Thyroid gland (tissue), 4 donors: ENCODE measurements at regions of chr19 and their contacts with region 1.

Region 1: DNA sequence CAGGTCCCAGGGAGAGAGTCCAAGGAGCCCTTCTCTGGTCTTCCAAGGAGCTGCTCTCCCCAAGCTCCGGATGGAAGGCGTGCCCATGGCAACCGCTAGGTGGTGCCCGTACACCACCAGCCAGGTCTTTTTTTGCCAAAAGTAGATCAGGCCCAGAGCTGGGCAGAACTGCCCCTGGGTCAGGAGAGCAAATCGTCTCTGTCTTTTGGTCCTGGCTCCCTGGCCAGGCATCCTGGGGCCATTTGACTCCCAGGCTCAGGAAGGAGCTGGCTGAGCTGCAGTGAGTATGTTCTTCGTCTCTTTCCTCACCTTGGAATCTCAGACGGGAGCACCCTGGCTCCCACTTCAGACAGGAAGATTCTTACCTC is 24.6 kb upstream of the BCL3 start:
- DNase-seq: peak; percentile 81 to 83
- H3K4me3 ChIP-seq: no peak overlapping the region
- H3K27ac ChIP-seq: peak overlapping the region in 1 of 3 donors; percentile 58
- H3K4me1 ChIP-seq: peaks cover 18 to 43% of the 10 kb centered on the region in 2 donors
- H3K27me3 ChIP-seq: no peaks in the 10 kb centered on the region
- CTCF ChIP-seq: peak; percentile 87 to 98 (median 97)
- POLR2A ChIP-seq: no peak

Region 2: GRCh38 chr19:44757735-44758505 is 34.0 kb after region 1 on chr19:
- intact Hi-C with region 1: loop called (anchors 5 kb)
- DNase-seq: peak; percentile 57 to 66
- H3K4me3 ChIP-seq: peak overlapping the region in 1 of 3 donors; percentile 8
- H3K27ac ChIP-seq: peak overlapping the region; percentile 51 to 96 (median 55)
- H3K4me1 ChIP-seq: peaks cover 28 to 51% of the 10 kb centered on the region in 2 donors
- H3K27me3 ChIP-seq: no peaks in the 10 kb centered on the region
- CTCF ChIP-seq: peak in 1 of 6 experiments; percentile 12
- POLR2A ChIP-seq: no peak

Region 3: DNA sequence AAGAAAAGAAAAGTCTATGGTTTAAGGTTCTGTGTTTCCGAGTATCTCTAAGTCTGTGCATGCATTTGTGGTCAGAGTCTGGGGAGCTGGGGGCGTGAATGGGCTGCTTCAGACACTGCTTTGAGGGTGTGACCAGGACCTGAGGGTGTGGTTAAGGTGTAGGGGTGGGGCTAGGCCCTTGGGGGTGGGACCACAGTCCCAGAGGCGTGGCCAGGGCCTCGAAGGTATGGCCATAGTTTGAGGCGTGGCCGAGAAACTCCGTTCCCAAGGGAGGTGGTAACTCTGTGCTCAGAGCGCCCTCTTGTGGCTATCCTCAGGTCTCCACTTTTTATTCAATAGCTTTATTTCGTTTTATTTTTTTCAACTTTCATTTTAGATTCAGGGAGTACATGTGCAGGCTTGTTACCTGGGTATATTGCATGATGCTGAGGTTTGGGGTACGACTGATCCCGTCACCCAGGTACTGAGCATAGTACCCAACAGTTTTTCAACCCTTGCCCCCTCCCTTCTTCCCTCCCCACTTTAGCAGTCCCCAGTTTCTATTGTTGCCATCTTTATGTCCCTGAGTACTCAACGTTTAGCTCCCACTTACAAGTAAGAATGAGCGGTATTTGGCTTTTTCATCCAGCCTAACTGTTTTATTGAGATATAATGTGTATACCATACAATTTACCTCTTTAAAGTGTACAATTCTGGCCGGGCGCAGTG is 46.8 kb after region 1 on chr19:
- intact Hi-C with region 1: loop called (anchors 5 kb)
- DNase-seq: peak; percentile 95 to 97
- H3K4me3 ChIP-seq: no peak overlapping the region
- H3K27ac ChIP-seq: no peak overlapping the region
- H3K4me1 ChIP-seq: no peaks in the 10 kb centered on the region
- H3K27me3 ChIP-seq: no peaks in the 10 kb centered on the region
- CTCF ChIP-seq: peak in 5 of 6 experiments; percentile 73 to 97 (median 84)
- POLR2A ChIP-seq: no peak